Heart right ventricle (tissue), 16 donors: ENCODE measurements at regions of chr2 and their contacts with region 1.

Region 1: DNA sequence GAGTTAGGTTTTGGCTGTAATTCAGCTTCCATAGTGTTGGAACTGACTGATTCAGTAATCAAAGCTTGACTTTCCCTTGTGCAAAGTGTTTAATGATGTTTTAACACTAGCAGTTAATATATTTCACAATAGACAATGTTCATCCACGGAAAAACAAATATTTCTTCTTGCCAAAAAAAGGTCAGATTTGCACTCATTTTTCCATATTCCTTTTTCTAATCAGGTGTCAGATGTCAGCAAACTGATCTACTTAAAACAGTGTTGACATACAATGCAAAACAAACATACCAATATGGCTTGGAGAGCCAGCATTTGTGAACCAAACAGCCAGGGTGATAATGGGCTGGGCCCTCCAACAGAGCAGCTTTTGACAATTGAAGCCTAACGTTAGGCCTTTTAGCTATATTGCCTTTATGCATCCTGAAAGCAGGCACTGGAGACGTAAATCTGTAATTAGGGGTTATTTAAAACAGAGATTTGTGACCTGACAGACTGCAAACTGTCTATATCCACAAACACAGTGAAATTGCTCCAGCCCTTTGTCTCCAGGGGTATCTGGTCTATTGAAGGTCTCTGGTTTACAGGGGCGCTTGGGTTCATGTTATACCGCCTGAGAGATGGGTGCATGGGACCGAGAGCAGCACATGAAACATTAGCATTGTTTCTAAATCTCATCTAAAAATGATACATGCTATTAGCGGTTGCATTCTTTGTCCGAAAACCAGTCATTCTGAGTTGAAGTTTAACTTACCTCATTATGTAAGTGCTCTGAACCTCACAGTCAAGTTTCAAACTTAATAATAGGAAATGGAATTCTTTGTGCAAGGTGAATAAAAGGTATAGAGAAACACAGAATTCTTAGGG is 7.1 kb upstream of the CDCA7 start:
- DNase-seq: no peak
- ATAC-seq: no peak
- H3K4me3 ChIP-seq: no peak overlapping the region
- H3K27ac ChIP-seq: no peak overlapping the region
- H3K4me1 ChIP-seq: no peaks in the 10 kb centered on the region
- H3K27me3 ChIP-seq: peaks cover 0 to 37% (median 15%) of the 10 kb centered on the region in 7 donors
- CTCF ChIP-seq: no peak

Region 2: GRCh38 chr2:173249661-173250641 is 97.6 kb before region 1 on chr2:
- intact Hi-C with region 1: loop called in 1 of 10 experiments (anchors 5 kb)
- DNase-seq: no peak
- ATAC-seq: no peak
- H3K4me3 ChIP-seq: no peak overlapping the region
- H3K27ac ChIP-seq: no peak overlapping the region
- H3K4me1 ChIP-seq: no peaks in the 10 kb centered on the region
- H3K27me3 ChIP-seq: no peaks in the 10 kb centered on the region
- CTCF ChIP-seq: no peak